PC-3 (cell line): ENCODE measurements at regions of chr16 and their contacts with region 1.

Region 1: DNA sequence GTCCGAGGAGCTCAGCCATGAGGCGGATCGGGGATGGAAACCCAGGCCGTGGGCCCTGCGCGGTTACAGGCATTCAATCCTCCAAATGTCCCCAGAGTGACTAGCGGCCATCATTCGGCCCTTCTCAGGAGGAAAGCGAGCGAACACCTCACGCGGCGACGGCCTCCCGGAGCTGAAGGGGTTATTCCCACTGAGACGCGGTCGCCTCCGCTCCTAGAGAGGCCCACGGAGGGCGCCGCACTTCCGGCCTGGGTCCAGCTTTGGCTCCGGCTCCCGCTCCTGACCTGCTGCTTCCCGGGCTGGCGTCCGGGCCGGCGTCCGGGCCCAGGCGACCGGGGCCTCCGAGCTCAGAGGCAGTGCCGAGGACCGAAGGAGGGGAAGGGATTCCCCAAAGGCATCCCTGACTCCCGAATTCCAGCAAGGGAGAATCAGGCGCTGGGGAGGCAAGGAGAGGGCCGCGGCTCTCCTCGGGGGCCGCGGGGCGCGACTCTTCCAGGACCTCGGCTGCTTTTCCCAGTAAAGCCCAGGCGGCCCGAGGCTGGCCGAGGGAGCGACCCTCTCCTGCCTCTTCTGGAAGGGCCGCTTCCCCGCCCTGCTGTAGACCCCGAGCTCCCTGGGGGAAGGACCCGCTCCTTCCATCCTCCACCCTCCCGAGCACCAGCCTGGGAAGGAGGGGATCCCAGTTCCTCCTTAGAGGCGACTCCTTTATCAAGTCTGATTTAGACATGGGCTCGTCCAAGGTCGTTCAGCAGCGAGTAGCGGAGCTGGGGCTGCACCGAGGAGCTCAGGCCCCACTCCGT is 18.6 kb upstream of the ZNF629 start:
- DNase-seq: peak; percentile 71
- ATAC-seq: peak; percentile 96
- H3K4me3 ChIP-seq: peak overlapping the region; percentile 82
- H3K27ac ChIP-seq: peak overlapping the region; percentile 32; the same call in 1 of the 2 replicates
- H3K4me1 ChIP-seq: peaks cover 10% of the 10 kb centered on the region
- H3K27me3 ChIP-seq: no peaks in the 10 kb centered on the region
- CTCF ChIP-seq: no peak

Region 2: DNA sequence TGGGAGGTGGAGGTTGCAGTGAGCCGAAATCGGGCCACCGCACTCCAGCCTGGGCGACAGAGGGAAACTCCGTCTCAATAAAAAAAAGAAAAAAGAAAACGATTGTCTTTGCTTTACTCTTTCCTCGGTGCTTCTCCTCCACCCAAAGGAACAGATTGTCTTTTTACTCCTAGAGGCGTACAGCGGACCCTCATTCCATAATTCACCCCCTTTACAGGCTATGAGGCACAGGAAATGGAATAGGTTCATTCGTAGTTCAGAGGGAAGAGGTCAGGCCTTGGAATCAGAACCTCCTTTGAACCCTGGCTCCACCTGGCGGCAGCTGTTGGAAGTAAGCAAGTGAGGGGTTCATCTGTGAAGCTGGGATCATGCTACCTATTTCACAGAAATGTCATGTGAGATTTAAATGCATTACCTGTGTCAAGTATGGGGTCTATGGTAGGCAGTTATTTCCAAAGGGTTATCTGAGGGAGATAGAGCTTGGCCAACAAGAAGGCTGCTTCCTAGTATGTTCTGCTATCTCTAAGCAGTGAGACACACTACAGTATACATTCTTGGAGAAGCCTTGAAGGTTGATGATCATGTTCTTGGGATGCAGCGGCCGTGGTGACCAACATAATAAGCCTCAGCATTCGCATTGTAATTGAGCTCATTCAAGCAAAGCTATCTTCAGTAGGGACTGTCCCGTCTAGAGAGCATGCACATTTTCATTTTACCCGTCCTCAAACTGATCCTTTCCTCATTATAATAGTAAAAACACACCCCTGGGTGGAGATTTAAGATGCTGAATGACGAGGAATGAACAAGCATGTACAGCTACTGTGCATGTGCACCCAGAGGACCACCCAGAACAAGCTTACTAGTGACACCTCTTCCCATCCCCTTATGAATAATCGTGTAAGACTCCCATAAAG is 176.7 kb before region 1 on chr16:
- CTCF ChIA-PET with region 1: no interaction called
- POLR2A ChIA-PET with region 1: no interaction called
- intact Hi-C with region 1: no loop called
- DNase-seq: peak; percentile 84
- ATAC-seq: peak; percentile 88
- H3K4me3 ChIP-seq: no peak overlapping the region
- H3K27ac ChIP-seq: no peak overlapping the region
- H3K4me1 ChIP-seq: peaks cover 3% of the 10 kb centered on the region; the same call in 1 of the 2 replicates
- H3K27me3 ChIP-seq: no peaks in the 10 kb centered on the region
- CTCF ChIP-seq: peak; percentile 88

Region 3: DNA sequence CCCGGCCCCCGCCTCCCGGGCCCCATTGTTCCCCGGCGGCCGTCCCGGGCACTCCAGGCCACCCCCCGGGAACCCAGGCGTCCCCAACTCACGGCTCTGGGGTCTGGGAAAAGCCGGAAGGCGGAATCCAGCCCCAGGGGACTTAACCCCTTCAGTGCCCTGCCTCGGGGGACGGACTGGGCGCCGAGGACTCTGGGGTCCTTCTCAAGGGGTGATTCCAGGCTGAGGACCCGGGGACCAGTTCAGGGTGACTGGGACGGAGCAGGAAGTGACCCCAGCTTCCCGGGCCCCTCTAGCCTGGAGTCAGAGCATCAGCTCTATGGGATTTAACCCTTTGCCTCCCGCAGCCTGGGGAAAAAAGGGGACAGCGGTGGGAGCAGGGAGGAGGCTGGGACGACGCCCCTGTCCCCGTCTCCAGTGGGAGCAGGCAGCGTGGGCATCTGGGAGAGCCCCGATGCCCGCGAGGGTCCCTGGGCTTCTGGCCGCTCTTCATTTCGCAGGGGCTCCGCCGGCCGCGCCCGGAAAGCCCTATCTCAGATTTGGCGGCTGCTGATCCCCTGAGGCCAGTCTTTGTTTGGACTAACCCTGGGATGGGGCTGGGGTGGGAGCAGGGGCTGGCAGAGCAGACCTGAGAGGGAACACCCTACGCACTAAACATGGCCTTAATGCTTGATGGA is 18.5 kb before region 1 on chr16 and contains the start of gene ZNF629:
- CTCF ChIA-PET with region 1: interaction called, 4 read pairs
- POLR2A ChIA-PET with region 1: no interaction called
- intact Hi-C with region 1: loop called (anchors 1 kb)
- DNase-seq: peak; percentile 39
- ATAC-seq: peak; percentile 75
- H3K4me3 ChIP-seq: peak within 1 kb of the TSS; percentile 88
- H3K27ac ChIP-seq: no peak within 1 kb of the TSS
- H3K4me1 ChIP-seq: peaks cover 4% of the 10 kb centered on the region; the same call in 1 of the 2 replicates
- H3K27me3 ChIP-seq: no peaks in the 10 kb centered on the region
- CTCF ChIP-seq: no peak
- total RNA-seq, gene ZNF629: 7.8 and 8.4 TPM in 2 replicates